Activated T-helper 1 cell treated with anti-CD3 and anti-CD28 coated beads, Interleukin-12 subunit alpha, Interleukin-12 subunit beta, Interleukin-2, Interleukin-4 antibody, amounts not matched to agents 30 ng/mL and 10 ng/mL and 1 ng/mL, durations not matched to agents 14 hours and 24 hours and 36 hours (primary cell): ENCODE measurements at regions of chr5 and their contacts with region 1.

Region 1: GRCh38 chr5:14809369-14810155 is 62.0 kb downstream of the ANKH start:
- DNase-seq: peak; percentile 74
- H3K4me3 Mint-ChIP-seq: peak overlapping the region; percentile 80
- H3K27ac Mint-ChIP-seq: peak overlapping the region; percentile 88
- H3K4me1 Mint-ChIP-seq: peaks cover 37% of the 10 kb centered on the region
- H3K27me3 Mint-ChIP-seq: no peaks in the 10 kb centered on the region

Region 2: DNA sequence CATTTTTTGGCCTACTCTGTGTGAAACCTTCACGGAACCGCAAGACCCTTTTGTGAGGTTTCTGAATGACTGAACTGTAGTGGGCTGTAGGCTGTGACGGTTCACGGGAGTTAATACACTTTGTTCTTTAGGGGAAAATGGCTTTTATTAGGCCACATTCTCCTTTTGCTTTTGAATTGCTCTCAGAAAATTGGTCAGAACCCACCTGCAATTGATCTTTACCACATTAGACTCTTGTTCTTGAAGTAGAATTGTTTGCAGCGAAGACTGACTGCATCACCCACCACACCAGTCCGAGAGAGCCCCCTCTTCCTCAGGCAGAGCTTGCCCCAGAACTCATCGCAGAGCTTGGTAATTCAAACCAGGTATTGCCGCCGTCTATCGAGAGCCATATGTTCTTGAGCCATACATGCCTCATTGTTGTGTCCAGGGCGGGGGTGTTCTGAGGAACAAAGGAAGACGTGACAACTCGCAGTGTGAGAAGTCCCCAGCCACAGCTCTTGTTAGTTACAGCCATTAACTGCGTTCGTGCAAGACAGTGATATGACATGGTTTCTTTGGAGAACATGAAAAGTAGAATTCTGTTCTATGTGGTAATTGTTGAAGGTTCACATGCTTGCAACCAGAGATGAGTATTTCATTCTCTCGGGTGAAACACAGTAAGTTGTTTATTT is 394.4 kb before region 1 on chr5:
- intact Hi-C with region 1: loop called (anchors 1 kb)
- DNase-seq: no peak
- H3K4me3 Mint-ChIP-seq: peak overlapping the region; percentile 43
- H3K27ac Mint-ChIP-seq: peak overlapping the region; percentile 90
- H3K4me1 Mint-ChIP-seq: peaks cover 52% of the 10 kb centered on the region
- H3K27me3 Mint-ChIP-seq: peaks cover 7% of the 10 kb centered on the region

Region 3: DNA sequence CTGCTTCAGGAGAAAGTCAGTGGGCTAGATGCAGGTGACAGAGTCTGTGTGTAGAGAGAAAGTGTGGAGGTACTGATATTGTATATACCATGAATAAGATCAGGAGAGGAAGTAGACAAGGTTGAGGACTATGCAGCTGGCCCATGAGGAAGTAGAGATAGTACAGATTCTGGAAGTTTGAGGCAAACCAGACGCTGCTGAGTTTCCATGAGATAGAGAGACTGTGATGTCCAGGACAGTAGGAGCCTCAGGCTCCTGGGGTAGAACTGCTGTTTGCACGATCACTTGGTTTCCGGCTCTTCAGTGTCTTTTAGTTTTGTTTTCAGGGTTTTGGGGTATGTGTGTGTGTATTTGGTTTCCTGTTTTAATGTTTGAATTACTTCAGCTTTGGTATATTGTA is 214.4 kb before region 1 on chr5:
- intact Hi-C with region 1: loop called (anchors 5 kb)
- DNase-seq: peak; percentile 49
- H3K4me3 Mint-ChIP-seq: peak overlapping the region; percentile 78
- H3K27ac Mint-ChIP-seq: peak overlapping the region; percentile 98
- H3K4me1 Mint-ChIP-seq: peaks cover 76% of the 10 kb centered on the region
- H3K27me3 Mint-ChIP-seq: no peaks in the 10 kb centered on the region

Region 4: GRCh38 chr5:14685757-14686156 is 123.8 kb before region 1 on chr5:
- intact Hi-C with region 1: loop called (anchors 5 kb)
- DNase-seq: no peak
- H3K4me3 Mint-ChIP-seq: no peak overlapping the region
- H3K27ac Mint-ChIP-seq: peak overlapping the region; percentile 93
- H3K4me1 Mint-ChIP-seq: peaks cover 38% of the 10 kb centered on the region
- H3K27me3 Mint-ChIP-seq: no peaks in the 10 kb centered on the region

Region 5: GRCh38 chr5:14783691-14784206 is 25.8 kb before region 1 on chr5:
- intact Hi-C with region 1: loop called (anchors 2 kb)
- DNase-seq: no peak
- H3K4me3 Mint-ChIP-seq: no peak overlapping the region
- H3K27ac Mint-ChIP-seq: peak overlapping the region; percentile 59
- H3K4me1 Mint-ChIP-seq: peaks cover 30% of the 10 kb centered on the region
- H3K27me3 Mint-ChIP-seq: no peaks in the 10 kb centered on the region

Region 6: GRCh38 chr5:14914603-14915277 is 105.2 kb after region 1 on chr5:
- intact Hi-C with region 1: no loop called
- DNase-seq: no peak
- H3K4me3 Mint-ChIP-seq: no peak overlapping the region
- H3K27ac Mint-ChIP-seq: peak overlapping the region; percentile 40
- H3K4me1 Mint-ChIP-seq: peaks cover 7% of the 10 kb centered on the region
- H3K27me3 Mint-ChIP-seq: peaks cover 7% of the 10 kb centered on the region

Region 7: DNA sequence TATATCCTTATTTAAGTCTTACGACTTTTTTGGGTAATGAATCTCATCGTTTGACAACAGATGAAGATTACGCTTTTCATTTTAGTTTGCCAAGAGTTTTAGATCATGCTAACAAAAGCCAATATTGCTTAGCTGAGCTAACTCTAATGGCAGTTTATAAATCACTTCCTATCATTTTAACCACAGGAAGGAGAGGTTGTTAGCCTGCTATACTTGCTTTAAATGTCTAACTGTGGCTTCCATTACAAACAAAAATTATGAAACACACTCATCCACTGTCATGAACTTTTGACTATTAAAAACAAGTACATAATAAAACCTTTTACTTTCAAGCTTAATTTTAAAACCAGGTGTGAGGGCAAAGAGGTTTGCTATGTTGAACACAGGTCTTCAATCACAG is 115.8 kb after region 1 on chr5:
- intact Hi-C with region 1: loop called (anchors 1 kb)
- DNase-seq: no peak
- H3K4me3 Mint-ChIP-seq: peak overlapping the region; percentile 15
- H3K27ac Mint-ChIP-seq: peak overlapping the region; percentile 78
- H3K4me1 Mint-ChIP-seq: peaks cover 58% of the 10 kb centered on the region
- H3K27me3 Mint-ChIP-seq: peaks cover 2% of the 10 kb centered on the region

Region 8: GRCh38 chr5:16465544-16466466 is 1656.2 kb after region 1 on chr5 and contains the start of gene ZNF622:
- intact Hi-C with region 1: loop called (anchors 10 kb)
- DNase-seq: peak; percentile 86
- H3K4me3 Mint-ChIP-seq: peak within 1 kb of the TSS; percentile 99
- H3K27ac Mint-ChIP-seq: peak within 1 kb of the TSS; percentile 95
- H3K4me1 Mint-ChIP-seq: peaks cover 66% of the 10 kb centered on the region
- H3K27me3 Mint-ChIP-seq: no peaks in the 10 kb centered on the region
- total RNA-seq, gene ZNF622: 54.4 and 55.6 TPM in 2 replicates